Psoas muscle (tissue), 8 donors: ENCODE measurements at regions of chr2 and their contacts with region 1.

Region 1: DNA sequence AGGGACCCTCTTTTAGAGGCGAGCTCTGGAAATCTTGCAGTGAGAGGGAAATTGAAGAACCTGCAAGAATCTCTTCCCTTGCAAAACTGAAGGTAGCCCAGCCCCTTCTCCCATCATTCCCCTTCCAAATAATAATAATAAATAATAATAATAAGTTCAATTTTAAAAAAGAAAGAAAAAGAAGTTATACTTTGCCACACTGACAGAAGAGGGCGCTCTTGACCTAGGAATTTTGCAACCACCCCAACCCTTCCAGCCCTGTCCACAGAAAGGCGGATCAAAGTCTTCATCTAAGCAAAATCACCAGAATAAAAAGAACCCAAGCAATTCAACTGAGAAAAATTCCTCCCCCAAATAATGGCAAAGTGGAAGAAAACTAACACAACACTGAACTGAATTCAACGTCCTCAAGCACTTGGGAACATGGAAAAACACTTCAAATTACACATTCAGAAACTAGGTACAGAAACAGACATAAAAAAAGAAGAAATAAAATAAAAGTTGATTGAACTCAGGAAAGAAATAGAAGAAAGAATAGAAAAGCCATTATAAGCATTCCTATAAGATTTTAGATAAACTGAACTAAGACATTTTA is 98.9 kb upstream of the GLS start:
- DNase-seq: no peak
- ATAC-seq: peak in 2 of 4 donors; percentile 62 to 74
- H3K4me3 ChIP-seq: no peak overlapping the region
- H3K27ac ChIP-seq: no peak overlapping the region
- H3K4me1 ChIP-seq: no peaks in the 10 kb centered on the region
- H3K27me3 ChIP-seq: peaks cover 0 to 2% (median 0%) of the 10 kb centered on the region in 3 donors
- CTCF ChIP-seq: peak; percentile 65

Region 2: GRCh38 chr2:190407662-190408537 is 373.8 kb before region 1 on chr2 and contains the start of gene MFSD6:
- intact Hi-C with region 1: no loop called
- DNase-seq: peak; percentile 52 to 71
- ATAC-seq: peak; percentile 67 to 85 (median 80)
- H3K4me3 ChIP-seq: peak within 1 kb of the TSS; percentile 81
- H3K27ac ChIP-seq: peak within 1 kb of the TSS; percentile 50
- H3K4me1 ChIP-seq: no peaks in the 10 kb centered on the region
- H3K27me3 ChIP-seq: peaks cover 0 to 12% (median 0%) of the 10 kb centered on the region in 3 donors
- CTCF ChIP-seq: no peak
- total RNA-seq, gene MFSD6: 4.0 to 9.4 (median 5.2) TPM

Region 3: GRCh38 chr2:191020221-191020741 is 238.6 kb after region 1 on chr2:
- intact Hi-C with region 1: loop called in 1 of 2 experiments (anchors 10 kb)
- DNase-seq: peak; percentile 92 to 96
- ATAC-seq: peak; percentile 98 to 100 (median 99)
- H3K4me3 ChIP-seq: peak overlapping the region; percentile 72
- H3K27ac ChIP-seq: peak overlapping the region; percentile 90
- H3K4me1 ChIP-seq: peaks cover 5% of the 10 kb centered on the region
- H3K27me3 ChIP-seq: no peaks in the 10 kb centered on the region
- CTCF ChIP-seq: peak; percentile 18

Region 4: DNA sequence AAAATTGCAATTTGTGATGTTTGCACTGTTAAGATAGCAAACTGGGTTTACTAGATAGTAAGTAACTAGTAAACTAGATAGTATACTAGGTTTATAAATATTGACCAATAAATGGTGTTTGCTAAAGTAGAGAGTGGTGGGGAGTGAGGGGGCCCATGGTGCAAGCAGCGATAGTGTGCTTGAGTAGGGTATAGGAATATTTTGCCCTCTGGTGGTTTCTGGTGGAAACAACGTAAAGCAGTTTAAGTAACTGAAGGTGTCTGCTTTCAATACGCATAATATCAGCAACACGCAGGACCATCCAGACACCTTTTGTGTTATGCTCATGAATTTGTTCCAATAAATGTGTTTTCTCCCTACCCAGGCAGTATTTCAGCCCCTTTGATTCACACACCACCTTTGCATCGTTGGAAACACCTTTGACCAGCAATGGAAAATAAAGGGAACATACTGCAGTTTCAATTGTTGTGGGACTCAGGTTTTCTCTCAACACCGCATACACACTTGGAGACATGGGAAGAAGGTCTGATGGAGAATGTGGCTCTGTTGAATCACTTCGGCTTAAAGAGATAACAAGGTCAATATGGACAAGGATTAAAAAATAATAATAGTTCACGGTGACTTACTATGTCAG is 248.9 kb after region 1 on chr2:
- intact Hi-C with region 1: loop called (anchors 2 to 10 kb)
- DNase-seq: no peak
- ATAC-seq: peak in 3 of 4 donors; percentile 56 to 83 (median 79)
- H3K4me3 ChIP-seq: no peak overlapping the region
- H3K27ac ChIP-seq: no peak overlapping the region
- H3K4me1 ChIP-seq: no peaks in the 10 kb centered on the region
- H3K27me3 ChIP-seq: no peaks in the 10 kb centered on the region
- CTCF ChIP-seq: peak; percentile 61